ENCODE measurements at regions of chr19 and their contacts with region 1.

Region 1: GRCh38 chr19:37466798-37467607 is at the start of gene ZNF569:
- H3K4me3 ChIP-seq: peak within 1 kb of the TSS; percentile 63
- H3K27ac ChIP-seq: peak within 1 kb of the TSS; percentile 88
- H3K4me1 ChIP-seq: peaks cover 6% of the 10 kb centered on the region; the same call in 1 of the 2 replicates
- CTCF ChIP-seq: peak; percentile 88

Region 2: GRCh38 chr19:37313335-37313627 is 153.7 kb before region 1 on chr19:
- CTCF ChIA-PET with region 1: no interaction called
- POLR2A ChIA-PET with region 1: interaction called, 10 read pairs
- H3K4me3 ChIP-seq: no peak overlapping the region
- H3K27ac ChIP-seq: no peak overlapping the region
- H3K4me1 ChIP-seq: no peaks in the 10 kb centered on the region
- CTCF ChIP-seq: no peak

Region 3: GRCh38 chr19:37506387-37507166 is 39.6 kb after region 1 on chr19 and contains the start of gene ZNF793:
- CTCF ChIA-PET with region 1: no interaction called
- POLR2A ChIA-PET with region 1: interaction called, 27 read pairs
- H3K4me3 ChIP-seq: peak within 1 kb of the TSS; percentile 53
- H3K27ac ChIP-seq: peak within 1 kb of the TSS; percentile 68
- H3K4me1 ChIP-seq: no peaks in the 10 kb centered on the region
- CTCF ChIP-seq: peak; percentile 41; the same call in 1 of the 2 replicates

Region 4: DNA sequence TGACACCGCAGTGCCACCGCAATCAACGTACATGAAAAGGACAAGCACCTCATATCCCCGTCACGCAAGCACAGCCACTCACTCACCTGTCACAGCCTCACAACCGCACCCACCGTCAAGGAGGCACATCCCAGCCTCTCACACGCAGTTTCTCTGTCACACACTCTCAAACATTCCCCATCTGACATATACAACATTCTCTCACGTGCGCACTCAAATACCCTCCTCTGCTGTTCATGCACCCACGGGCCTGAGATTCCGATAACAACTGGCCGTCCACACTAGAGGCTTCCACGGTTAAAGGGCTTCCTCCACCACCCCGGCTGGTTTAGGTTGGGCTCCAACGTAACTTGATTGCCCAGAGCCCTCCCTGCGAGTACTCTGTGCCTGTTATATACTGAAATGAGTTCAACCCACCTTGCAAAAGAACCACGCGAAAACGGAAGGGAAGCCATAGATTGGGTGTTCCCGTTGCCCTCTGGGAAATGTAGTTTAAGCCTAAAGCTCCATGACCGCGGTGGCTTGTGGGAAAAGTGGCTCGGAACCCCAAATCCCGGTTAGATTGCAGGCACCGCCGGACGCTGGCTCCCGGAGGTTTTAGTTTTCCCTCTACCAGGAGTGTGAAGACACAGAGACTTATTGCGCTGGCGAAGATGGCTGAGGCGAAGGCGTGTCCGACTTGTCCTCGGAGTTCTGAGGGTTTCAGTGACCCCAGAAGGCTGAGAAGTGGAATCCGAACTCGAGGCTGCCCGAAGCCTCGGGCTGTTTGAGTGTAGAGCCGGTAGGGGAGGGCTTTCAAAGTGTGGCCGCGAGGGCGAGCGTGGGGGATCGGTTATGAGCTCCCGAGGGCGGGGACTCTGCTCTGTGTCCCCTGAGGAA is 312.4 kb after region 1 on chr19 and contains the start of gene ZNF573:
- CTCF ChIA-PET with region 1: no interaction called
- POLR2A ChIA-PET with region 1: interaction called, 19 read pairs
- H3K4me3 ChIP-seq: peak within 1 kb of the TSS; percentile 56
- H3K27ac ChIP-seq: peak within 1 kb of the TSS; percentile 86
- H3K4me1 ChIP-seq: peaks cover 3% of the 10 kb centered on the region; the same call in 1 of the 2 replicates
- CTCF ChIP-seq: peak; percentile 77